ENCODE measurements at regions of chr12 and their contacts with region 1.

Region 1: DNA sequence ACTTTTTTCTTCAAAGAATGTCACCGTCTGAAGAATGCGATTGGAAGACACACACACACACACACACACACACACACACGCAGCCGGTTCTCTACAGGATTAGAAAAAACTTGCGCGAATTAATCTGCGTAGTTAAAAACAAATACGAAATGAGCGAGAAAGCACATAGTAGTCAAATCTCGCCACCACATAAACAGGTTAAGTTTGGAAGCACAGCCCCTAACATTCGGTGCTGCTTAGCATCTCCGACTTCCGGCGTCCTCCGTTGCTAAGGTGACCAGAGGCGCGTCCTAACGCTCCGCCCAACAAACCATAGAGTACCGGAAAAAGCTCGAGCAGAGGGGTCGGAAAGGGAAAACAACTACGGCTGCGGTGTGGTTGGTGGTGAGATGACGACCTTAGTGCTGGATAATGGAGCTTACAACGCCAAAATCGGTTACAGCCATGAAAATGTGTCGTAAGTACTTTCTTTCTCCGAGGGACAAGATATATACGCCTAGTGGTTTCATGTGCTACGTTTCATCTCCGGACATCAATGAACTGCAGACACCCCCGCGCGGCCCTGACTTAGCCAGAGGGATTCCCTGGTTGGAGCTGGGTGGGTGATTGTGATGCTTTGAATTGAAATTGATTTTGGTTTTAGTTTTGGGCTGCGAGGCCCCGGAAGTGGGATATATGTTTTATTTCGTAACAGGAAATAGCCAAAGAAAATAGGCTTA is at the start of gene ACTR6:
- DNase-seq: peak; percentile 98
- ATAC-seq: peak; percentile 99
- total RNA-seq, gene ACTR6: 18.7 TPM

Region 2: DNA sequence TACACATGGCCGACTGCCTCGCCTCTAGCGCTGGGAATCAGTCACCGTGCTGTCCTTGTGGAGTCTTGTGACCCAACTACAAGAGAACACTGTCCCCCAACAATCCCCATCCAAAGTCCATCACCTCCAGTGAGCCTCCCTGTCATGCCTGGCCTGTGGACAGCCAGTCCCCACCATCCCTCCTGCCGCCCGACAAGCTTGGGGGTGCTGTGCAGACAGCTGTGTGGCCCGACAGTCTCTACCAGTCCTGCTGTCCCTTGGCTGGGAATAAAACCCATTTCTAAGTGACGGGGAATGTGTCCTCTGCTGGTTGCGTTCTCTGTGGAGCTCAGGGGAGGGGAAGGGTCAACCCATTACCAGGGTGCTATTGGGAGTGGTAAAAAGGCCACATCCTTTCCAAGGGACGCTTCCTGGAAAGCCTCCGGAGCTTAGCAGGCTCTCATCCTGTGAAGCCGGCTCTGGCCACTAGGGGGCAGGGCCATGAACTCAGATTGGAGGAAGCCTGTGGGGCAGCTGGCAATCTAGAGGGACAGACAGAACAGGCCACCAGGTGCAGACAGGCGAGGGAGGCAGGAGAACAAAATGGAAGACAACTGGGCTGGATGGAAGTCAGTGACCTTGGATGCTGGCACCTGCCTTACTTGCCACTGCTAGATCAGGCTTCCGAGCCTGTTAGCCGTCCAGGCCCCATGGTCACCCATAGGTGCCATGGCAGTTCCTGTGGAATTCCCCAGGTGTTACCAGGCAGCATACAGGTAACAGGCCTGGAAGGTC is 46.0 kb before region 1 on chr12:
- intact Hi-C with region 1: loop called (anchors 5 kb)
- DNase-seq: peak; percentile 88
- ATAC-seq: peak; percentile 69